ENCODE measurements at regions of chr4 and their contacts with region 1.

Region 1: DNA sequence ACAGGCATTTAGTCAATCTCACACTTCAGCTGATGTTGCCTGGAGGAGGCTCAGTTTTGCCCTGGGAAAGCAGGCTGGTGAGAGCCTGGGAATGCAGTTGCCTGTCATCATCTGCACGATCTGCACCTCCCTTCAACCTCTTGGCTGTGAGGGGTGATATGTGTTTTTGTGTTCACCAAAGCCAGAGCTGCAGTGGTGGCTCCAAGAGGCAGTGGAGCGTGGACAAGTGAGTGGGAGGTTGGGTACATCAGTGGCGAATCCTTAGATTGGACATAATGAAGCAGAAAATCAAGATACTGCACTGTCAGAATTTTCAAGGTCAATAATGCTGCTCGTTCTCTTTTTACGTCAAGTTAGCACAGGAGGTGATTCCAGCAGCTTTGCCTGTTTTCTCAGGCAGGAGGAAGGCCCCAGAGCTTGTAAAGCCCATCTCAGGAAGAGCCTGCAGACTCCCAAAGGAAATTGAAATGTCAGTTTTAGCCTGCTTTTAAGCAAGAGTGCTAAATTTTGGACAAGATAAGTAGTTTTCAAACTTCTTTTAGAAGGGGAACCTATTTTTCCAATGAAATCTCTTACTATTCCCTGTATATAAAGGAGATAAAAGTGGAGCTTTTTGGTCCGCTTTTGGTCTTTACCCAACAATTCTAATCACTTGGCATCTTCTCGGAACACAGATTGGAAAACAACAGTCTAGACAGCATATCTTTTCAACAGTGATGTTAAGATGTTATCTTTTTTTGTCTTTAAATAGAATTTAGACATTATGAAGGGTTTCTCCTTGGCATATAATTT is 92.8 kb downstream of the FRAS1 start:
- DNase-seq: no peak
- ATAC-seq: no peak
- H3K4me3 ChIP-seq: no peak overlapping the region
- H3K27ac ChIP-seq: no peak overlapping the region
- H3K4me1 ChIP-seq: no peaks in the 10 kb centered on the region
- H3K27me3 ChIP-seq: no peaks in the 10 kb centered on the region
- CTCF ChIP-seq: no peak

Region 2: GRCh38 chr4:78186597-78187543 is 36.9 kb after region 1 on chr4:
- intact Hi-C with region 1: loop called in 1 of 10 experiments (anchors 5 kb)
- DNase-seq: no peak
- ATAC-seq: no peak
- H3K4me3 ChIP-seq: no peak overlapping the region
- H3K27ac ChIP-seq: no peak overlapping the region
- H3K4me1 ChIP-seq: peaks cover 0 to 5% (median 0%) of the 10 kb centered on the region in 9 donors
- H3K27me3 ChIP-seq: no peaks in the 10 kb centered on the region
- CTCF ChIP-seq: no peak